MCF 10A (cell line): ENCODE measurements at regions of chr1 and their contacts with region 1.

Region 1: GRCh38 chr1:159071970-159072582 is 4.5 kb downstream of the AIM2 start:
- DNase-seq: peak; percentile 78
- H3K4me3 Mint-ChIP-seq: no peak overlapping the region
- H3K27ac Mint-ChIP-seq: no peak overlapping the region
- H3K4me1 Mint-ChIP-seq: no peaks in the 10 kb centered on the region
- H3K27me3 Mint-ChIP-seq: no peaks in the 10 kb centered on the region
- CTCF ChIP-seq: peak; percentile 91

Region 2: GRCh38 chr1:158527190-158527815 is 544.8 kb before region 1 on chr1:
- CTCF ChIA-PET with region 1: interaction called, 4 read pairs
- POLR2A ChIA-PET with region 1: interaction called, 4 read pairs
- intact Hi-C with region 1: loop called (anchors 1 kb)
- DNase-seq: peak; percentile 53
- H3K4me3 Mint-ChIP-seq: no peak overlapping the region
- H3K27ac Mint-ChIP-seq: no peak overlapping the region
- H3K4me1 Mint-ChIP-seq: no peaks in the 10 kb centered on the region
- H3K27me3 Mint-ChIP-seq: peaks cover 100% of the 10 kb centered on the region
- CTCF ChIP-seq: peak; percentile 93

Region 3: DNA sequence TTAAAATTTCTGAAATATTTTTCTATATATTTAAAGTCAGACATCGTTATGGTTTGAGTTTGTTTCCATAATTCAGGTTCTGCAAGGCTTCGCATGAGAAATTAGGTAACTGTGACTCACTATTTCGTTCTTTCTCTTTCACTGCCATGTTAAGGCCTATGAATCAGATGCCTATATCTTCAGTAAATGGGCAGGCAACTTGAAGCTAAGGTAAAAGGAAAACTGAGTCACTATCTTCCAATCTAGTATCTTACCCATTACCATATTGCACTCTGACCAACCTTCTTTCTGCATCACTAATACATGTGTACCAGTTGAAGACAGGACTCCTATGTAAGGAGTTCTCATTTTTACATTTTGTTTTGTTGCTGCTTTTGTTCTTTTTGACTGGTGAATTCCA is 102.9 kb before region 1 on chr1:
- CTCF ChIA-PET with region 1: no interaction called
- POLR2A ChIA-PET with region 1: no interaction called
- intact Hi-C with region 1: no loop called
- DNase-seq: peak; percentile 28
- H3K4me3 Mint-ChIP-seq: no peak overlapping the region
- H3K27ac Mint-ChIP-seq: no peak overlapping the region
- H3K4me1 Mint-ChIP-seq: peaks cover 7% of the 10 kb centered on the region
- H3K27me3 Mint-ChIP-seq: peaks cover 41% of the 10 kb centered on the region
- CTCF ChIP-seq: no peak

Region 4: GRCh38 chr1:158998781-158999161 is 73.3 kb before region 1 on chr1:
- CTCF ChIA-PET with region 1: interaction called, 13 read pairs
- POLR2A ChIA-PET with region 1: interaction called, 8 read pairs
- intact Hi-C with region 1: loop called (anchors 1 kb)
- DNase-seq: peak; percentile 81
- H3K4me3 Mint-ChIP-seq: peak overlapping the region; percentile 65
- H3K27ac Mint-ChIP-seq: peak overlapping the region; percentile 63
- H3K4me1 Mint-ChIP-seq: peaks cover 22% of the 10 kb centered on the region
- H3K27me3 Mint-ChIP-seq: no peaks in the 10 kb centered on the region
- CTCF ChIP-seq: peak; percentile 95

Region 5: DNA sequence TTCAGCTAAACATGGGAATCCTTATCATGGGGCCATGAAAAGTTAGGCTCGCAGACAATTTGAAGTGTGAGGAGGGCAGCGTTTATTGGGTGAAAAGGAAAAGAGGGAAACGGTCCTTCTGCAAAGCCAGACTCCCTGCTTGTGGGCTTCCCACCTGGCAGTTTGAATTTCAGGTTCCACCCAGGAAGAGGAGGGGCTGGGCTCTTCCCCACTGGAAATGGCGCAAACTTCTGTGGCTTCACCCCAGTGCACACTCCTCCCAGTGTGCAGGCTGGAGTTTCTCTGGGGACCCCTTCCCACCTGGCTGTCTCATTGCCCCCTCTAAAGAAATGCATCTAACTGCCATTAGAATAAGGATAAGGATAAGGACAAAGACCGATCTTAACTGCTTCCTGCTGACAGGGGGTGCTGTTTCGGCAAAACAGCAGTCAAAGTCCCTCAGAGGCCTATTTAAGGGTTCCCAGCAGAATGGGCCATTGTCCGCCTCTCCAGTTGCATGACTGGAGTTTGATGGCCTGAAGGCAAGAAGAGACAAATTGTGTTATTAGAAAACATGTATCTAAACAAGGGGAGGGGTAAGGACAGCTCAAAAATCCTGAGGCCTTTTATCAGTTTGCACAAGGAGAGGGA is 15.9 kb before region 1 on chr1:
- CTCF ChIA-PET with region 1: interaction called, 119 read pairs
- POLR2A ChIA-PET with region 1: interaction called, 5 read pairs
- intact Hi-C with region 1: no loop called
- DNase-seq: no peak
- H3K4me3 Mint-ChIP-seq: no peak overlapping the region
- H3K27ac Mint-ChIP-seq: no peak overlapping the region
- H3K4me1 Mint-ChIP-seq: peaks cover 18% of the 10 kb centered on the region
- H3K27me3 Mint-ChIP-seq: no peaks in the 10 kb centered on the region
- CTCF ChIP-seq: peak; percentile 22

Region 6: DNA sequence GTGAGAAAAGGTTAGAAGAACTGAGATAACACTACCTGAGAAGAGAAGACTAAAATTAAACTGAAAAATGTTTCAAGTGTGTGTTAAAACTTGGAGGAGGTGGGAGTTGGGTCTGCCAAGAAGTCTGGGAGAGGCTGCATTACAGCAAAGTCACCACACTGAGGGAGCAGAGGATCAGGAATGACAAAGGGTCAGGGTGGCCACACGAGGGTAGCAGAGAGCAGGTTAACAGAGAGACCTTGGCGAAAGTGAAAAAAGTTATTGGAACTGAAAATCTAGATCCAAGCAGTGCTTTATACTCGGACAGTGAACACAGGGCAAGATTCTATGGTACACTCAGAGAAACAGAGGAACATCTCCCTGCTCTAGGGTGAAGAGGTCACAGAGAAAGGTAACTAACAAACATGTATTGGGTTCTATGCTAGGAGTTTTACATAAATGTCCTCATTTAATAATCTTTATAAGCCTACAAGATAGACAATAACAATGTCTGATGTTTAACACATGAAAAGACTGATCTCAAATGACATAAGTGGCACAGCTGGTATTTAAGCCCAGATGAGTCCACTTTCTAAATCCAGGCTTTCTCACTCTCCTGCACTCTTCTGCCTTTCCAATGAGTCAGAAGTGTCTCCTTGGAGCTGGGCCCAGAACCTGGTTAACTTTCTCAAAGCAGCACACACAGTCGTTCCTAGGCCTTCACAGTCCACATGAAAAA is 89.1 kb after region 1 on chr1:
- CTCF ChIA-PET with region 1: no interaction called
- POLR2A ChIA-PET with region 1: no interaction called
- intact Hi-C with region 1: no loop called
- DNase-seq: peak; percentile 99
- H3K4me3 Mint-ChIP-seq: peak overlapping the region; percentile 43
- H3K27ac Mint-ChIP-seq: peak overlapping the region; percentile 69
- H3K4me1 Mint-ChIP-seq: peaks cover 34% of the 10 kb centered on the region
- H3K27me3 Mint-ChIP-seq: peaks cover 36% of the 10 kb centered on the region
- CTCF ChIP-seq: peak; percentile 100

Region 7: GRCh38 chr1:159223004-159223403 is 150.9 kb after region 1 on chr1:
- CTCF ChIA-PET with region 1: no interaction called
- POLR2A ChIA-PET with region 1: no interaction called
- intact Hi-C with region 1: no loop called
- DNase-seq: no peak
- H3K4me3 Mint-ChIP-seq: no peak overlapping the region
- H3K27ac Mint-ChIP-seq: no peak overlapping the region
- H3K4me1 Mint-ChIP-seq: peaks cover 6% of the 10 kb centered on the region
- H3K27me3 Mint-ChIP-seq: no peaks in the 10 kb centered on the region
- CTCF ChIP-seq: no peak